HEK293 (cell line): ENCODE measurements at regions of chr1 and their contacts with region 1.

Region 1: GRCh38 chr1:110053557-110054428 is 16.7 kb downstream of the ALX3 start:
- H3K4me3 ChIP-seq: no peak overlapping the region
- H3K27ac ChIP-seq: no peak overlapping the region
- H3K4me1 ChIP-seq: no peaks in the 10 kb centered on the region
- CTCF ChIP-seq: peak; percentile 92

Region 2: DNA sequence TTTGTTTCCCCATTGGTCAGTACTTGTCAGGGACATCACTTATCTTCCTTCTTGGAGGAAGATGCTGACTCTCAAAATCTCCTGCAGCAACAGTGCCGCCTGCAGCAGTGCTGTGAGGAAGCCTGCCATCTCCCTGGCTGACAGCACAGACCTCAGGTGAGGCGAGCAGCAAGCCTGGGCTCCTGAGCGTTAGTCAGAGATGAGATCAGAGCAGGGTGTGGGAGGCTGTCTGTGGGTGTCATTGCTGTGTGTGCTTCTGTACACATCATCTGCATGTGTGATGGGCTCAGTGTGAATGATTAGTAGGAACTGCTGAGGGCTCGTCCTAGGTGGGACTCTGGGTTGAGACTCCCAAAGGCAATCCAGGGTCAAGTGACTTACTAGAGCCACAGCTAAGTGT is 13.2 kb before region 1 on chr1:
- CTCF ChIA-PET with region 1: interaction called, 34 read pairs
- POLR2A ChIA-PET with region 1: interaction called, 3 read pairs
- H3K4me3 ChIP-seq: no peak overlapping the region
- H3K27ac ChIP-seq: no peak overlapping the region
- H3K4me1 ChIP-seq: peaks cover 3% of the 10 kb centered on the region; the same call in 1 of the 2 replicates
- CTCF ChIP-seq: no peak

Region 3: GRCh38 chr1:110082477-110082876 is 28.7 kb after region 1 on chr1:
- CTCF ChIA-PET with region 1: interaction called, 14 read pairs
- POLR2A ChIA-PET with region 1: no interaction called
- H3K4me3 ChIP-seq: no peak overlapping the region
- H3K27ac ChIP-seq: no peak overlapping the region
- H3K4me1 ChIP-seq: no peaks in the 10 kb centered on the region
- CTCF ChIP-seq: no peak

Region 4: GRCh38 chr1:110106013-110106941 is 52.5 kb after region 1 on chr1:
- CTCF ChIA-PET with region 1: interaction called, 92 read pairs
- POLR2A ChIA-PET with region 1: interaction called, 4 read pairs
- H3K4me3 ChIP-seq: no peak overlapping the region
- H3K27ac ChIP-seq: no peak overlapping the region
- H3K4me1 ChIP-seq: no peaks in the 10 kb centered on the region
- CTCF ChIP-seq: peak; percentile 87